ENCODE measurements at regions of chr1 and their contacts with region 1.

Region 1: GRCh38 chr1:226332947-226333346 is 24.0 kb upstream of the LIN9 start:
- DNase-seq: no peak
- H3K4me3 Mint-ChIP-seq: no peak overlapping the region
- H3K27ac Mint-ChIP-seq: no peak overlapping the region
- H3K4me1 Mint-ChIP-seq: peaks cover 15% of the 10 kb centered on the region
- H3K27me3 Mint-ChIP-seq: no peaks in the 10 kb centered on the region

Region 2: GRCh38 chr1:226186124-226187018 is 146.6 kb before region 1 on chr1 and contains the start of gene ACBD3:
- CTCF ChIA-PET with region 1: interaction called, 3 read pairs
- POLR2A ChIA-PET with region 1: no interaction called
- intact Hi-C with region 1: loop called (anchors 5 kb)
- DNase-seq: peak; percentile 91
- H3K4me3 Mint-ChIP-seq: peak within 1 kb of the TSS; percentile 93
- H3K27ac Mint-ChIP-seq: peak within 1 kb of the TSS; percentile 91
- H3K4me1 Mint-ChIP-seq: peaks cover 34% of the 10 kb centered on the region
- H3K27me3 Mint-ChIP-seq: no peaks in the 10 kb centered on the region
- total RNA-seq, gene ACBD3: 18.7 to 20.7 TPM

Region 3: DNA sequence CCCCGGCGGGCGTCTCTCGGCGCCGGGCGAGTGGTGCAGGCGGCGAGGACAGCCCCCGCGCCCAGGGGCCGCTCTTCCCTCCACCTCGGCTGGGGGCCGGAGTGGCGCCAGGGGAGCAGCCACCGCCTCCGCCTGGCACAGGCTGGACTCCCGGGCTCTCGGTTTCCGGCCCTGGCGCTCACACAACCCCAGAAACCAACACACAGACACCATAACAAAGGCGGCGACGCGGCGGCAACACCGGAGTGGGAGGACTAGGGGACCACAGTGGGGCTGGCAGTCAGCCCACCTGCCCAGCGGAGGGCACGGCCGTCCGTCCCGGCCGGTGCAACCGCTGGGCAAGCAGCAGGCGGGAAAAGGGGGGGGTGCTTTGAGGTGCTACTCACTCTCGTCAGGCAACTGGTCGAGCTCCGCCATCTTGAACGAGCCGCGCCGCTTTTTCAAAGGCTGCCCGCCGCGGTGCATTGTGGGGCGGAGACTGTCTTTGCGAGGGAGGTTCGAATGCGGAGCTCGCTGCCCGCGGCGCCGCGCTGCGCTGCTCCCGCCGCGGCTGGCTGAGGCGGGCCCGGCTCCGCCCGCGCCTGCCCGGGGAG is 24.1 kb before region 1 on chr1 and contains the start of gene LIN9:
- CTCF ChIA-PET with region 1: interaction called, 17 read pairs
- POLR2A ChIA-PET with region 1: interaction called, 6 read pairs
- intact Hi-C with region 1: loop called (anchors 1 kb)
- DNase-seq: peak; percentile 95
- H3K4me3 Mint-ChIP-seq: peak within 1 kb of the TSS; percentile 89
- H3K27ac Mint-ChIP-seq: peak within 1 kb of the TSS; percentile 74
- H3K4me1 Mint-ChIP-seq: peaks cover 12% of the 10 kb centered on the region
- H3K27me3 Mint-ChIP-seq: peaks cover 8% of the 10 kb centered on the region
- total RNA-seq, gene LIN9: 9.5 to 9.6 TPM